ENCODE measurements at regions of chr5 and their contacts with region 1.

Region 1: DNA sequence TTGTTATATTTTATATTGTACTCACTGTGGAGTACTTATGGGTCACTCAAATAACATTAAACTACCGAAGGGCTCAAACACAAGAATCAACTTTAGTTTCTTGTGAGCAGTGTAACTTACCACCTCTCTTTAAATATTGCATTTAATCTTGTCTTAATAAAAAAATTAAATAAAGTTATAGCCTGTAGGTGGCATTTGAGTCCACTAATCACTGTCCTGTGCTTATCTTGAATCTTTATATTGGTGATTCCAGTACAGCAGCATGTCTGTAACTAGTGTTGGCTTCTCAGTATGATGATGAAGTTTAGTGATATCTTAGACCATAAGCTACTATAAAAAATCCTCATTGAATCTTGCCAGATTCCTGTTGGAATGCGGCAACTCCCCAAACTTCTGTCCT is 313.8 kb downstream of the FAM170A start:
- DNase-seq: no peak
- H3K4me3 ChIP-seq: no peak overlapping the region
- H3K27ac ChIP-seq: no peak overlapping the region
- H3K4me1 ChIP-seq: no peaks in the 10 kb centered on the region
- H3K27me3 ChIP-seq: no peaks in the 10 kb centered on the region
- CTCF ChIP-seq: peak in 4 of 5 experiments; percentile 19 to 31 (median 24)
- EP300 ChIP-seq: no peak
- POLR2A ChIP-seq: no peak

Region 2: GRCh38 chr5:119878723-119879122 is 64.4 kb before region 1 on chr5:
- in situ Hi-C with region 1: no loop called
- intact Hi-C with region 1: no loop called
- DNase-seq: no peak
- H3K4me3 ChIP-seq: no peak overlapping the region
- H3K27ac ChIP-seq: no peak overlapping the region
- H3K4me1 ChIP-seq: peaks cover 0 to 23% (median 3%) of the 10 kb centered on the region in 4 donors
- H3K27me3 ChIP-seq: no peaks in the 10 kb centered on the region
- CTCF ChIP-seq: no peak
- EP300 ChIP-seq: no peak
- POLR2A ChIP-seq: no peak

Region 3: DNA sequence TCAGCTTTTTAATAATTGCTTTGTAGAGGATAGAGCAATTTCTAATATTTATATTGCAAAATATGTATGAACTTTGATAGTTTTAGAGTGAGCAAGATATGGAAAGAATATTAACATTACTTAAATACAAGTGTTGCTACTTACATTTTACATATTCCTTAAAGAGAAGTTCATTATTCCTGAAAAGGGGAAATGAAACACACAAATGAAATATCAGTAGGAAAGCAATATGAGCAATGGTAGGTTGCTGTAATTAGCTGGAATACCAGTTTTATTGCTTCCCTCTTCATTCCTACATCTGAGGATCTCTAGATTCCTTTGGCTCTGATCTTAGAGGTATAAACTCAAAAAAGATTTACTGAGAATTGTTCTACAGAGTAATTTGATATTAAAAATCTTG is 100.3 kb after region 1 on chr5:
- in situ Hi-C with region 1: no loop called
- intact Hi-C with region 1: no loop called
- DNase-seq: no peak
- H3K4me3 ChIP-seq: no peak overlapping the region
- H3K27ac ChIP-seq: no peak overlapping the region
- H3K4me1 ChIP-seq: no peaks in the 10 kb centered on the region
- H3K27me3 ChIP-seq: no peaks in the 10 kb centered on the region
- CTCF ChIP-seq: no peak
- EP300 ChIP-seq: no peak
- POLR2A ChIP-seq: no peak

Region 4: GRCh38 chr5:120457839-120458507 is 514.8 kb after region 1 on chr5:
- in situ Hi-C with region 1: loop called in 1 of 4 experiments (anchors 25 kb)
- intact Hi-C with region 1: no loop called
- DNase-seq: peak; percentile 81
- H3K4me3 ChIP-seq: peak overlapping the region in 3 of 4 donors; percentile 38 to 59 (median 39)
- H3K27ac ChIP-seq: peak overlapping the region in 3 of 4 donors; percentile 11 to 48 (median 40)
- H3K4me1 ChIP-seq: no peaks in the 10 kb centered on the region
- H3K27me3 ChIP-seq: peaks cover 13% of the 10 kb centered on the region
- CTCF ChIP-seq: peak; percentile 58 to 80 (median 71)
- EP300 ChIP-seq: no peak
- POLR2A ChIP-seq: no peak